ENCODE measurements at regions of chr2 and their contacts with region 1.

Region 1: DNA sequence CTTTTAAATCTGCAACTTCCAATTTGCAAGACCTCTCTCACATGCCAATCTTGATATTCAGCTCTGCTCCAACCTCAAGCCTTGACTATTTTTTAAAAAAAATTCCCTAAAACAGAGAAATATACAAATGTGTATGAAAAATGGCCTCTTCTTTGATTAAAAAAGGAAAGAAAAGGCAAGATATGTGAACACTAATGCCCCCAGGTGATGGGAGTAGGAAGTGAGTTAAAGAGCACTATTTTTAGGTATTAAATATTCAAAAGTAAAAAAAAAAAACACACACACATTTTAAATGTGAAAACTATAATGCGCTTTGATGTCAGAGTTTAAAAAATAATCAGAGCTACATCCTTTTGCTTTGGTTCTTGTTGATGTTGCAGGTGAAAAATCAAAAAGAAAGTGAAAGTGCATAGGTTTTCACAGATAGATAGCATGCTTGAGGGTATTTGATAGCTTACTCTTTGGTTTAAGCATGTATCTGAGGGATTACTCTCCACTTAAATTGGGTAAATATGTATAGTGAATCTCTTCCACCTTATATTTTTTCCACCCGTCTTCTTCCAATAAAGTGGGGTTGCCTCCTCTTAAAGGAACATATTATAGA is 406.0 kb upstream of the POU3F3 start:
- DNase-seq: peak in 2 of 14 experiments; percentile 9 to 11
- ATAC-seq: no peak
- H3K4me3 ChIP-seq: peak overlapping the region; percentile 12
- H3K4me3 Mint-ChIP-seq: peak overlapping the region; percentile 70
- H3K27ac ChIP-seq: no peak overlapping the region
- H3K27ac Mint-ChIP-seq: no peak overlapping the region
- H3K4me1 ChIP-seq: no peaks in the 10 kb centered on the region
- H3K4me1 Mint-ChIP-seq: peaks cover 20% of the 10 kb centered on the region
- H3K27me3 ChIP-seq: no peaks in the 10 kb centered on the region
- H3K27me3 Mint-ChIP-seq: no peaks in the 10 kb centered on the region
- CTCF ChIP-seq: no peak

Region 2: GRCh38 chr2:102841107-102841840 is 1606.7 kb before region 1 on chr2:
- CTCF ChIA-PET with region 1: no interaction called
- POLR2A ChIA-PET with region 1: no interaction called
- intact Hi-C with region 1: loop called in 1 of 2 experiments (anchors 5 kb)
- DNase-seq: peak in 4 of 14 experiments; percentile 9 to 34 (median 20)
- ATAC-seq: no peak
- H3K4me3 ChIP-seq: no peak overlapping the region
- H3K4me3 Mint-ChIP-seq: no peak overlapping the region
- H3K27ac ChIP-seq: no peak overlapping the region
- H3K27ac Mint-ChIP-seq: no peak overlapping the region
- H3K4me1 ChIP-seq: no peaks in the 10 kb centered on the region
- H3K4me1 Mint-ChIP-seq: no peaks in the 10 kb centered on the region
- H3K27me3 ChIP-seq: no peaks in the 10 kb centered on the region
- H3K27me3 Mint-ChIP-seq: peaks cover 7% of the 10 kb centered on the region
- CTCF ChIP-seq: no peak

Region 3: GRCh38 chr2:104487366-104487765 is 39.4 kb after region 1 on chr2:
- CTCF ChIA-PET with region 1: no interaction called
- POLR2A ChIA-PET with region 1: no interaction called
- intact Hi-C with region 1: no loop called
- DNase-seq: peak in 2 of 14 experiments; percentile 5 to 8
- ATAC-seq: no peak
- H3K4me3 ChIP-seq: no peak overlapping the region
- H3K4me3 Mint-ChIP-seq: no peak overlapping the region
- H3K27ac ChIP-seq: no peak overlapping the region
- H3K27ac Mint-ChIP-seq: no peak overlapping the region
- H3K4me1 ChIP-seq: no peaks in the 10 kb centered on the region
- H3K4me1 Mint-ChIP-seq: no peaks in the 10 kb centered on the region
- H3K27me3 ChIP-seq: no peaks in the 10 kb centered on the region
- H3K27me3 Mint-ChIP-seq: peaks cover 9% of the 10 kb centered on the region
- CTCF ChIP-seq: no peak

Region 4: GRCh38 chr2:104769096-104769495 is 321.2 kb after region 1 on chr2:
- CTCF ChIA-PET with region 1: no interaction called
- POLR2A ChIA-PET with region 1: no interaction called
- intact Hi-C with region 1: no loop called
- DNase-seq: no peak
- ATAC-seq: no peak
- H3K4me3 ChIP-seq: no peak overlapping the region
- H3K4me3 Mint-ChIP-seq: no peak overlapping the region
- H3K27ac ChIP-seq: no peak overlapping the region
- H3K27ac Mint-ChIP-seq: no peak overlapping the region
- H3K4me1 ChIP-seq: no peaks in the 10 kb centered on the region
- H3K4me1 Mint-ChIP-seq: no peaks in the 10 kb centered on the region
- H3K27me3 ChIP-seq: no peaks in the 10 kb centered on the region
- H3K27me3 Mint-ChIP-seq: peaks cover 3% of the 10 kb centered on the region
- CTCF ChIP-seq: no peak